Natural killer cell (primary cell): ENCODE measurements at regions of chr2 and their contacts with region 1.

Region 1: DNA sequence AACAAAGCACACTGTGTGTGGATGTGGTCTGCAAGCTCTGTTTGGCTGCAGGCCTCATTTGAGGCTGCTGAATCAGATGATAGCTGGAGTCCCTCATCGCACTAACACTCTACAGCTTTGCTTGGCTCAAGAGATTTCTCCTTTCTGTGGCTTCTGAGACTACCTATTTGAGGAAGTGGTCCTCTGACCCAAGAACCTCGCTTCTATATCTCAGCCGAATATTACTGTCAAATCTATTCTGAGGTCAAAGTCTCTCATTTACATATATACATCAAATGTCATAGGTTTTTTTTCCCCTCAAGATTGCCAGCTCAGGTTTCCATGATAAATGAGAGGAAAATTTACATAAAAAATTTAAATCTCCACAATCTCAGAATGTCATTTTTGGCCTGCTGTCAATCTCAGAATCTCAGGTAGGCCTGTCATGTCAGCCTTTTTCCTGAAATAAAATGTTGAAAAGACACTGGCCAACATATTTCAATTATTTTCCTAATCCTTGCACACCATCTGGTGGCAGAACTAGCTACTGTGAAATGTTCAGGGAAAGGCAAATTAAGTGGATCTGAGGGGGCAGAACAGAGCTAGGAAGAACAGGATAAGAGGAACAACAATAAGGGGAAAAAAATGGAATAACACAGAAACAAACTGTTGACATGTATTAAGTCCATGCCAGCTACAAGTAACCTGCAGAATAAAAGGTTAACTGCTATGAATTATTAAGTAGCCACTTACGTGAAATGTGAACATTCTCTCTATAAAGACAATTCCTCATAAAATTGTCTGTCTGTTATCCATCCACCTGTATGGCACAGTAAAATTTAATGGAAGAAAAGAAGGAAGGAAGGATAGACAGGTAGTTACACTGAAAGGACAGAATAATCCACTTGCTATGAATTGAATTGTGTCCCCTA is 39.3 kb downstream of the AP1S3 start:
- DNase-seq: peak in 1 of 2 donors; percentile 42
- ATAC-seq: peak; percentile 41 to 73 (median 64)
- H3K4me3 ChIP-seq: no peak overlapping the region
- H3K4me3 Mint-ChIP-seq: no peak overlapping the region
- H3K27ac ChIP-seq: no peak overlapping the region
- H3K27ac Mint-ChIP-seq: no peak overlapping the region
- H3K4me1 ChIP-seq: peaks cover 3% of the 10 kb centered on the region
- H3K4me1 Mint-ChIP-seq: peaks cover 0 to 5% of the 10 kb centered on the region in 2 donors
- H3K27me3 ChIP-seq: no peaks in the 10 kb centered on the region
- H3K27me3 Mint-ChIP-seq: no peaks in the 10 kb centered on the region
- CTCF ChIP-seq: peak; percentile 72

Region 2: DNA sequence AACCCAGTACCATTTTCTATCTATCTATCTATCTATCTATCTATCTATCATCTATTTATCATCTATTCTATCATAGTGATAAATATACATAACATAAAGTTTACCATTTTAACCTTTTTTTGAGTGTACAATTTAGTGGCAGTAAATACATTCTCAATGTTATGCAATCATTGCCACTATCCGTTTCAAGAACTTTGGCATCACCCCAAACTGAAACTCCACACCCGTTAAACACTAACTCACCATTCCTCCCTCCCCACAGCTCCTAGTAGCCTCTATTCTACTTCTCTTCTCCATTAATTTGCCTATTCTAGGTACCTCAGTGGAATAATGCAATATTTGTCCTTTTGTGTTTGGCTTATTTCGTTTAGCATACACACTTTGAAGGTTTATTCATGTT is 828.6 kb before region 1 on chr2:
- intact Hi-C with region 1: loop called (anchors 2 kb)
- DNase-seq: no peak
- ATAC-seq: no peak
- H3K4me3 ChIP-seq: no peak overlapping the region
- H3K4me3 Mint-ChIP-seq: no peak overlapping the region
- H3K27ac ChIP-seq: no peak overlapping the region
- H3K27ac Mint-ChIP-seq: no peak overlapping the region
- H3K4me1 ChIP-seq: no peaks in the 10 kb centered on the region
- H3K4me1 Mint-ChIP-seq: no peaks in the 10 kb centered on the region
- H3K27me3 ChIP-seq: no peaks in the 10 kb centered on the region
- H3K27me3 Mint-ChIP-seq: peaks cover 0 to 9% of the 10 kb centered on the region in 2 donors
- CTCF ChIP-seq: no peak

Region 3: GRCh38 chr2:223674998-223675609 is 123.0 kb before region 1 on chr2:
- intact Hi-C with region 1: no loop called
- DNase-seq: no peak
- ATAC-seq: no peak
- H3K4me3 ChIP-seq: no peak overlapping the region
- H3K4me3 Mint-ChIP-seq: no peak overlapping the region
- H3K27ac ChIP-seq: no peak overlapping the region
- H3K27ac Mint-ChIP-seq: no peak overlapping the region
- H3K4me1 ChIP-seq: no peaks in the 10 kb centered on the region
- H3K4me1 Mint-ChIP-seq: no peaks in the 10 kb centered on the region
- H3K27me3 ChIP-seq: peaks cover 2% of the 10 kb centered on the region
- H3K27me3 Mint-ChIP-seq: peaks cover 12 to 21% of the 10 kb centered on the region in 2 donors
- CTCF ChIP-seq: no peak

Region 4: GRCh38 chr2:223727562-223727961 is 70.5 kb before region 1 on chr2:
- intact Hi-C with region 1: loop called (anchors 1 kb)
- DNase-seq: peak; percentile 22 to 67
- ATAC-seq: peak; percentile 85 to 97 (median 93)
- H3K4me3 ChIP-seq: no peak overlapping the region
- H3K4me3 Mint-ChIP-seq: no peak overlapping the region
- H3K27ac ChIP-seq: no peak overlapping the region
- H3K27ac Mint-ChIP-seq: peak overlapping the region in 1 of 2 donors; percentile 42
- H3K4me1 ChIP-seq: peaks cover 3% of the 10 kb centered on the region
- H3K4me1 Mint-ChIP-seq: peaks cover 5 to 7% of the 10 kb centered on the region in 2 donors
- H3K27me3 ChIP-seq: no peaks in the 10 kb centered on the region
- H3K27me3 Mint-ChIP-seq: peaks cover 5 to 6% of the 10 kb centered on the region in 2 donors
- CTCF ChIP-seq: peak; percentile 65

Region 5: GRCh38 chr2:223779877-223780276 is 18.2 kb before region 1 on chr2:
- intact Hi-C with region 1: no loop called
- DNase-seq: peak in 1 of 2 donors; percentile 67
- ATAC-seq: peak; percentile 70 to 91 (median 87)
- H3K4me3 ChIP-seq: no peak overlapping the region
- H3K4me3 Mint-ChIP-seq: no peak overlapping the region
- H3K27ac ChIP-seq: no peak overlapping the region
- H3K27ac Mint-ChIP-seq: no peak overlapping the region
- H3K4me1 ChIP-seq: no peaks in the 10 kb centered on the region
- H3K4me1 Mint-ChIP-seq: no peaks in the 10 kb centered on the region
- H3K27me3 ChIP-seq: no peaks in the 10 kb centered on the region
- H3K27me3 Mint-ChIP-seq: no peaks in the 10 kb centered on the region
- CTCF ChIP-seq: peak; percentile 33

Region 6: GRCh38 chr2:223957092-223957851 is 159.2 kb after region 1 on chr2 and contains the start of gene MRPL44:
- intact Hi-C with region 1: no loop called
- DNase-seq: peak; percentile 98
- ATAC-seq: peak; percentile 99 to 100 (median 100)
- H3K4me3 ChIP-seq: peak within 1 kb of the TSS; percentile 97
- H3K4me3 Mint-ChIP-seq: peak within 1 kb of the TSS; percentile 97
- H3K27ac ChIP-seq: peak within 1 kb of the TSS; percentile 79
- H3K27ac Mint-ChIP-seq: peak within 1 kb of the TSS; percentile 93 to 95
- H3K4me1 ChIP-seq: peaks cover 16% of the 10 kb centered on the region
- H3K4me1 Mint-ChIP-seq: peaks cover 46 to 56% of the 10 kb centered on the region in 2 donors
- H3K27me3 ChIP-seq: no peaks in the 10 kb centered on the region
- H3K27me3 Mint-ChIP-seq: no peaks in the 10 kb centered on the region
- CTCF ChIP-seq: no peak
- total RNA-seq, gene MRPL44: 27.6 to 35.1 (median 31.0) TPM